Heart right ventricle (tissue), 16 donors: ENCODE measurements at regions of chr15 and their contacts with region 1.

Region 1: GRCh38 chr15:52735231-52736089 is 54.7 kb downstream of the ONECUT1 start:
- DNase-seq: peak in 1 of 2 donors; percentile 74
- ATAC-seq: peak; percentile 72 to 88 (median 82)
- H3K4me3 ChIP-seq: no peak overlapping the region
- H3K27ac ChIP-seq: no peak overlapping the region
- H3K4me1 ChIP-seq: peaks cover 0 to 33% (median 13%) of the 10 kb centered on the region in 9 donors
- H3K27me3 ChIP-seq: no peaks in the 10 kb centered on the region
- CTCF ChIP-seq: peak; percentile 77 to 92 (median 85)

Region 2: DNA sequence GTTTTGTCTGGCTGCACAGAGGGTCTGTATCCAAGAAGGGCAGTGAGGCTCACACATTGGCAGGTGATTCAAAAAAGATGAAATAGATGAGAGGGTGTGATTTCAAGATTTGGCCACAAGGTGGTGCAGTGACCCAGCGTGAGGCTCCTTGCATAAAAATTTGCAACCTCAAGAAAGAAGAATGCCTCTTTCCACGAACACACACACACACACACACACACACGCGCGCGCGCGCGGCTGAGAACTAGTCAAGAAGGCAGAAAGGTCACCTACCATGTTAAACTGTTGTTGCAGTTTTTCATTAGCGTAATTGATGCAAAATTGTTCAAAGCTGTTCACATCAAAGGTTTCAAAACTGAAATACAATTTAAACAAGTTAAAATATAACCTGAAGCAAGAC is 479.1 kb before region 1 on chr15:
- intact Hi-C with region 1: loop called (anchors 1 to 5 kb)
- DNase-seq: peak; percentile 37 to 72
- ATAC-seq: peak; percentile 32 to 79 (median 52)
- H3K4me3 ChIP-seq: peak overlapping the region in 3 of 10 donors; percentile 9 to 15 (median 9)
- H3K27ac ChIP-seq: no peak overlapping the region
- H3K4me1 ChIP-seq: peaks cover 0 to 51% (median 18%) of the 10 kb centered on the region in 9 donors
- H3K27me3 ChIP-seq: no peaks in the 10 kb centered on the region
- CTCF ChIP-seq: peak; percentile 73 to 82 (median 78)

Region 3: GRCh38 chr15:52528991-52529926 is 206.2 kb before region 1 on chr15:
- intact Hi-C with region 1: loop called in 1 of 10 experiments (anchors 10 kb)
- DNase-seq: peak; percentile 60 to 74
- ATAC-seq: peak; percentile 78 to 89 (median 86)
- H3K4me3 ChIP-seq: peak overlapping the region; percentile 33 to 92 (median 84)
- H3K27ac ChIP-seq: peak overlapping the region; percentile 44 to 93 (median 82)
- H3K4me1 ChIP-seq: peaks cover 3 to 30% (median 16%) of the 10 kb centered on the region in 9 donors
- H3K27me3 ChIP-seq: peaks cover 0 to 32% (median 5%) of the 10 kb centered on the region in 7 donors
- CTCF ChIP-seq: peak in 2 of 9 donors; percentile 8 to 25

Region 4: GRCh38 chr15:52584414-52584813 is 151.0 kb before region 1 on chr15:
- intact Hi-C with region 1: loop called in 1 of 10 experiments (anchors 10 kb)
- DNase-seq: no peak
- ATAC-seq: no peak
- H3K4me3 ChIP-seq: no peak overlapping the region
- H3K27ac ChIP-seq: no peak overlapping the region
- H3K4me1 ChIP-seq: peaks cover 0 to 9% (median 0%) of the 10 kb centered on the region in 9 donors
- H3K27me3 ChIP-seq: no peaks in the 10 kb centered on the region
- CTCF ChIP-seq: no peak

Region 5: GRCh38 chr15:52615284-52615683 is 120.2 kb before region 1 on chr15:
- intact Hi-C with region 1: loop called in 3 of 10 experiments (anchors 10 kb)
- DNase-seq: no peak
- ATAC-seq: no peak
- H3K4me3 ChIP-seq: no peak overlapping the region
- H3K27ac ChIP-seq: no peak overlapping the region
- H3K4me1 ChIP-seq: no peaks in the 10 kb centered on the region
- H3K27me3 ChIP-seq: no peaks in the 10 kb centered on the region
- CTCF ChIP-seq: no peak

Region 6: GRCh38 chr15:52626671-52627369 is 108.6 kb before region 1 on chr15:
- intact Hi-C with region 1: loop called in 2 of 10 experiments (anchors 10 kb)
- DNase-seq: no peak
- ATAC-seq: no peak
- H3K4me3 ChIP-seq: no peak overlapping the region
- H3K27ac ChIP-seq: no peak overlapping the region
- H3K4me1 ChIP-seq: peaks cover 0 to 24% (median 0%) of the 10 kb centered on the region in 9 donors
- H3K27me3 ChIP-seq: no peaks in the 10 kb centered on the region
- CTCF ChIP-seq: no peak

Region 7: DNA sequence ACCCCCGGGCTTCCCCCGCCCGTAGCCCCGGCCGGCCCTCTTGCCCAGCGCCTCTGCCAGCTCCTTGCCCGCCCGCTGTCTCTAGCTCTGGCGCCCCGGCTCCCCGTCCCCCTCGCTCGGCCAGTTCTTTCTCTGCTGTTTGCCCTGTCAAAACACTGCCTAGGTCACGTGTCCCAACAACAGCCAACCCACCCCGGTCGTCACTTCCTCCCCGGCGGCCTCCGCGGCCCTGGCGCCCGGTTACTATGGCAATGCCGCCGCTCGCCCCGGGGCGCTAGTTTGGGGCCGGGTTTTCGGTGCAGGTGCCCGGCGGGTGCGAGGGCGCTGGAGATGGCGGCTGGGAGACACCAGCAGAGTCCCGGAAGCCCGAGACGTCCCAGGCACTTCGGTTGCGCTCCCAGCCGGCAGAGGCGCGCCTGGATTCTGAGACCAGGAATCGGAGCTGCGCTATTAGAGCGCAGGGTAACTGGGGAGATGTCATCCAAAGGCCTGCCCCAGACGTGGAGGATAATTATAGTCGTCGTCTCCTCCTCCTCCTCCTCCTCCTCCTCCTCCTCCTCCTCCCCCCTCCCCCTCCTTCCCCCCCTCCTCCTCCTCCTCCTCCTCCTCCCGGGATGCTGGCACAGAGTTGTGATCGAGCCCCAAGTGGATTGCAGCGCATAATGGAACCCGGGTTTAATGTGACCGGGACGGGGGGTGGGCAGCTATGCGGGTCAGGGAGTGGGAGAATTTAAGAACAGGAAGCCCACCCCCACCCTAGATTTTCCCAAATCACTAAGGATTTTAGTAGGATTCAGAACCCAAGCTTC is 56.0 kb before region 1 on chr15 and contains the start of gene ATOSA:
- intact Hi-C with region 1: loop called in 4 of 10 experiments (anchors 5 to 10 kb)
- DNase-seq: peak; percentile 90 to 94
- ATAC-seq: peak; percentile 93 to 97 (median 95)
- H3K4me3 ChIP-seq: peak within 1 kb of the TSS; percentile 74 to 95 (median 89)
- H3K27ac ChIP-seq: peak within 1 kb of the TSS; percentile 95 to 99 (median 97)
- H3K4me1 ChIP-seq: peaks cover 0 to 50% (median 44%) of the 10 kb centered on the region in 9 donors
- H3K27me3 ChIP-seq: no peaks in the 10 kb centered on the region
- CTCF ChIP-seq: peak in 4 of 9 donors; percentile 4 to 21 (median 12)
- total RNA-seq, gene ATOSA: 18.9 to 36.4 (median 30.3) TPM